Activated naive CD4-positive, alpha-beta T cell treated with anti-CD3 and anti-CD28 coated beads for 36 hours (primary cell): ENCODE measurements at regions of chr17 and their contacts with region 1.

Region 1: DNA sequence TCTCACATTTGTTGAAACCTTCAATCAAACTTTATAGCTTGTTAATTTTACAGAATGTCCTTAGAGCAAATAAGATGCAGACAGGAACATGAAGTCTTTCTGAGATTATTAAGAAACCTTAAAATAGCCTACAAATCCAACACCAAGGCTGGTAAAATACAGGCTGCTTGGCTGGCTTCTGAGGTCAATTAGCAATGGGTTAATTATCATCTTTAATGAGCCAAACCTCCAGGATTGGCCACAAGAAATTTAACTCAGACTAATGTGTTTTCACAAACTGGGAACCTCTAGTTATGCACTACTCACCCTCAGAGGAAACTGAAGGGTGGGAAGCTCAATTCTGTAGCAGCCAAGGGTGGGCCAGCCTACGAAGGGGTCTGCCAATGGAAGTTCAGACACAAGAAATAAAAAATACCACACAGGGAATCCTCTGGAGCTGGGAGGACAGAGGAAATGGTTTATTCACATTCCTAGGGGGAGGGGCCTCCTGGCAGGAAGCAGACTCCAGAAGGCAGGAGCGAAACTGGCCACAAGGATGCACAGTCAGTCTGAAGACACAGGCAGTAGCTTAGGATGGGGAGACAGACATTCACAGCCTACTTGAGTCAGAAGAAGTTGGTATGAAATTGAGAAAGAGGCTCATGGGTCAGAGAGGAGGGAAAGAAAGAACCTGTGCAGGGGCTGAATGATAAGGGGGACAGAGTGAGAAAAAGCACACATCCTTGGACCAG is 36.1 kb downstream of the HIC1 start:
- DNase-seq: no peak
- H3K4me3 Mint-ChIP-seq: no peak overlapping the region
- H3K27ac Mint-ChIP-seq: peak overlapping the region; percentile 57
- H3K4me1 Mint-ChIP-seq: peaks cover 55% of the 10 kb centered on the region
- H3K27me3 Mint-ChIP-seq: no peaks in the 10 kb centered on the region

Region 2: DNA sequence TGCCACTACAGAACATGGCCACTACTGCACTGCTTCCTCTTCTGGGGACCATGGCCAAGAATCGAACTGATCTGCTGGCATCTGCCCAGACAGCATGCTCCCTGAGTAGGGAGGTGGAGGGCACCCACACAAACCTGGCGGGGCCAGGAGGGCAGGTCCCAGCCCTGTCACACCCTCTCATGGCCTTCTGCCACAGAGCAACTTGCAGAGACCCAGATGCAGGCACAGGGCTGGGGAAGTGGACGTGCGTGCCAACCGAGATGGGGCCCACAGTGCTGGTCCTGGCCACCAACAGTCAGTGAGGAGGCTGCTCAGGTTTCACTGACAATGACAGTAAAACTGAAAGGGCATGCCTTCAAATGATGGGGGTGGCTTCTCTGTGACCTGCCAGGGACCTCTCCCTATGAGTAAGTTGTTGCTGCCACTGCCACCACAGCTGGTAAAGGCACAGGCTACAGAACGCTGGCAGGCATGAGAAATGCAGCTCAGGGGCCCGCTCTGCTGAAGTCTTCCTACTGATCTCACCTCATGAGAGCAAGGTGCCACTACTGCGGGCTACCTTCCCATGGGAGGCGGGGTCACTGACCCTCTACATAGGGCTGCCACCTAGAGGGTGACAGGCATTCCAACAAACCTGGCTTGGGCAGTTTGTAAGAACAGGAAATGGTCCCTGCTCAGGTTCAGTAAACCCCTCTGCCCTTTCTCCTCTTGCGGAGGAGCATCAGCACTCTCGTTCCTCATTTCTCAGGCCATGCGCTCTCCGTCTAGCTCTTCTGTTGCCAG is 20.5 kb before region 1 on chr17:
- CTCF ChIA-PET with region 1: interaction called, 4 read pairs
- intact Hi-C with region 1: loop called (anchors 1 kb)
- DNase-seq: peak; percentile 87
- H3K4me3 Mint-ChIP-seq: peak overlapping the region; percentile 22
- H3K27ac Mint-ChIP-seq: peak overlapping the region; percentile 43
- H3K4me1 Mint-ChIP-seq: peaks cover 32% of the 10 kb centered on the region
- H3K27me3 Mint-ChIP-seq: no peaks in the 10 kb centered on the region

Region 3: DNA sequence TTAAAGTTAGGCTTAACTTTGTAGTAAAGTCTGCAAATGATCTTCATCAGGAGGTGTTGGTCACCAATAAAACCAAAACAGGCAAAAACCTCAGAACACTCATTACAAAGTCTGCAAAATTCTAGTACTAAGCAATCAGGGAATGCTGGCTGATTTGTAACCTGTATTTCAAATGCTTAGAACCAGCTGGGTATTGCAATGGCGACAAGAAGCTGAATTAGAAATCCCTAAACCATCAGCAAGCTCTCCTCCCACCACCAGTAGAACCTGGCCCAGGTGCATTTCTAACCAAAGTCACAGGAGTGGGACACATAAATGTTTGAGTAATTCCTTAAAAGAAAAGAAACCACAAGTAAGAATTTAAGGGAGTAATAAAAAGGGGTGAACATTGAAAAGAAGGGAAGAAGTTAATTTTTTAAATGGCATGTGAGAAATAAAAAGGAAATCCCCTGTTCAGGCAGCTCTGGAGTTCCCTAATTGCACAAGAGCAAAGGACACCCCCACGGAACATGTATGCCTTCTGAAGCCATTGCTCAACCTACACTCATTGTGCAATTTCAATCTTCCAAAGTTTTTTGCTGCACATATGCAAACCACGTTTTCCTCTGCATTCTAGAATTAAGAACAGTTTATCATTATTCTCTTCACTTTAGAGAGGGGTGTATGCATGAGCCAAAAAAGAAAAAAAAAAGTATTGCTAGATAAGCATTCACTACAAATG is 66.9 kb after region 1 on chr17:
- CTCF ChIA-PET with region 1: no interaction called
- intact Hi-C with region 1: no loop called
- DNase-seq: no peak
- H3K4me3 Mint-ChIP-seq: no peak overlapping the region
- H3K27ac Mint-ChIP-seq: no peak overlapping the region
- H3K4me1 Mint-ChIP-seq: peaks cover 14% of the 10 kb centered on the region
- H3K27me3 Mint-ChIP-seq: no peaks in the 10 kb centered on the region

Region 4: GRCh38 chr17:2222901-2223616 is 132.1 kb after region 1 on chr17:
- CTCF ChIA-PET with region 1: interaction called, 3 read pairs
- intact Hi-C with region 1: loop called (anchors 2 kb)
- DNase-seq: peak; percentile 75
- H3K4me3 Mint-ChIP-seq: peak overlapping the region; percentile 46
- H3K27ac Mint-ChIP-seq: peak overlapping the region; percentile 79
- H3K4me1 Mint-ChIP-seq: peaks cover 42% of the 10 kb centered on the region
- H3K27me3 Mint-ChIP-seq: no peaks in the 10 kb centered on the region